Dorsolateral prefrontal cortex (tissue), 120 donors: ENCODE measurements at regions of chr18 and their contacts with region 1.

Region 1: GRCh38 chr18:70464343-70465114 is 175.7 kb downstream of the SOCS6 start:
- DNase-seq: peak; percentile 78 to 92 (median 86)
- H3K4me3 ChIP-seq: peak overlapping the region; percentile 6 to 69 (median 46)
- H3K27ac ChIP-seq: peak overlapping the region in 57 of 59 donors; percentile 21 to 91 (median 80)
- H3K27me3 ChIP-seq: no peaks in the 10 kb centered on the region
- CTCF ChIP-seq: peak in 54 of 56 donors; percentile 32 to 73 (median 53)

Region 2: DNA sequence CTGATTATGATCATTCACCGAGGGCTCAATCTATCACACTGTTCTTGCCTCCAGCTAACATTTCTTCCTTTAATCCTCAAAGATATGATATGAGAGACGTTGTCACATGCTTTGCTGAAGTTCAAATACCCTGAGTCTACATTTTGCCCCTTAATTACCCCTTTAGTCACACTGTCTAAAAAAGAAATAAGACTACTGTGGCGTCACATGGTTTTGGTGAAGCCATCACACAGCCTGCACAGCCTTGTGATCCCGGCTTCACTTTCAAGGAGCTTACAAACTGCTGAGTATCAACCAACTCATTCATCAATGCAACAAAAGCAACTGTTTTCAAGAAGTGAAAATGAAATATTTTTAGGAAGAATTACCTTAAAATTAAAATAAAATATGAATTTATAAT is 207.5 kb before region 1 on chr18:
- intact Hi-C with region 1: no loop called
- DNase-seq: no peak
- H3K4me3 ChIP-seq: peak overlapping the region in 3 of 59 donors; percentile 3 to 24 (median 6)
- H3K27ac ChIP-seq: peak overlapping the region in 5 of 59 donors; percentile 13 to 64 (median 45)
- H3K27me3 ChIP-seq: no peaks in the 10 kb centered on the region
- CTCF ChIP-seq: no peak

Region 3: GRCh38 chr18:70491734-70492348 is 27.3 kb after region 1 on chr18:
- intact Hi-C with region 1: loop called in 1 of 2 experiments (anchors 2 kb)
- DNase-seq: peak; percentile 37 to 83 (median 58)
- H3K4me3 ChIP-seq: no peak overlapping the region
- H3K27ac ChIP-seq: peak overlapping the region in 1 of 59 donors; percentile 7
- H3K27me3 ChIP-seq: no peaks in the 10 kb centered on the region
- CTCF ChIP-seq: peak; percentile 56 to 98 (median 87)

Region 4: GRCh38 chr18:70598406-70598805 is 133.9 kb after region 1 on chr18:
- intact Hi-C with region 1: no loop called
- DNase-seq: no peak
- H3K4me3 ChIP-seq: no peak overlapping the region
- H3K27ac ChIP-seq: no peak overlapping the region
- H3K27me3 ChIP-seq: no peaks in the 10 kb centered on the region
- CTCF ChIP-seq: no peak